Activated CD4-positive, alpha-beta T cell treated with anti-CD3 and anti-CD28 coated beads for 36 hours (primary cell): ENCODE measurements at regions of chr7 and their contacts with region 1.

Region 1: GRCh38 chr7:98280791-98281756 is at the start of gene BRI3:
- DNase-seq: peak; percentile 97
- ATAC-seq: peak; percentile 85
- H3K4me3 Mint-ChIP-seq: peak within 1 kb of the TSS; percentile 78
- H3K27ac Mint-ChIP-seq: peak within 1 kb of the TSS; percentile 76
- H3K4me1 Mint-ChIP-seq: peaks cover 27% of the 10 kb centered on the region
- H3K27me3 Mint-ChIP-seq: no peaks in the 10 kb centered on the region
- total RNA-seq, gene BRI3: 45.1 to 47.6 TPM

Region 2: DNA sequence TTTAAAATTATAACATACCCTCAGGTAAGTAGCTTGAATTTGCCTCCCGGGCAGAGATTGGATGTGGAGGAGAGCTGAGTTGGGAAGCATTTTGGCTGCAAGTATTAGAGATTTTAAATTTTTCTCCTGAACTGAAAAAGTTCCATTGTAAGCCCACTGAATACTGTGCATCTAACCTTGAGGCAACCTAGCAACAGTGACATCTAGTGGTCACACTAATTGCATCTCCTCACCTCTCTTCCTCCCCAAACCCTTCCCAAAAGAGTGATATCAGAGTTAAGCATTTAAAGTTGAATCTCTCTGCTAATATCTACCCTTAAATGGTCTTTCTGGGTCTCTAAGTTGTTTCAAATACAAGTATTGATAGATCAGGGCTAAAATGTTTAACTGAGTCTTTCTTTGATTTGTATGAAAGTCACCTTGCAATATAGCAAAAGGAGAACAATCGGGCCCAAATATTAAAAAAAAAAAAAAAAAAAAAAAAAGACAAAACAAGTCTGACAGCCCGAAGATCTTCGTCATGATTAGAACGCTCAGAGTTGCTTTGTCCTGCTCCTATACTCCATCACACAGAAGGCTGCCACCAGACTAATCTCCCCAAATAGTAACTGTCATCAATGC is 1216.0 kb before region 1 on chr7:
- CTCF ChIA-PET with region 1: no interaction called
- POLR2A ChIA-PET with region 1: no interaction called
- intact Hi-C with region 1: no loop called
- DNase-seq: peak; percentile 5
- ATAC-seq: no peak
- H3K4me3 Mint-ChIP-seq: no peak overlapping the region
- H3K27ac Mint-ChIP-seq: no peak overlapping the region
- H3K4me1 Mint-ChIP-seq: no peaks in the 10 kb centered on the region
- H3K27me3 Mint-ChIP-seq: peaks cover 8% of the 10 kb centered on the region

Region 3: DNA sequence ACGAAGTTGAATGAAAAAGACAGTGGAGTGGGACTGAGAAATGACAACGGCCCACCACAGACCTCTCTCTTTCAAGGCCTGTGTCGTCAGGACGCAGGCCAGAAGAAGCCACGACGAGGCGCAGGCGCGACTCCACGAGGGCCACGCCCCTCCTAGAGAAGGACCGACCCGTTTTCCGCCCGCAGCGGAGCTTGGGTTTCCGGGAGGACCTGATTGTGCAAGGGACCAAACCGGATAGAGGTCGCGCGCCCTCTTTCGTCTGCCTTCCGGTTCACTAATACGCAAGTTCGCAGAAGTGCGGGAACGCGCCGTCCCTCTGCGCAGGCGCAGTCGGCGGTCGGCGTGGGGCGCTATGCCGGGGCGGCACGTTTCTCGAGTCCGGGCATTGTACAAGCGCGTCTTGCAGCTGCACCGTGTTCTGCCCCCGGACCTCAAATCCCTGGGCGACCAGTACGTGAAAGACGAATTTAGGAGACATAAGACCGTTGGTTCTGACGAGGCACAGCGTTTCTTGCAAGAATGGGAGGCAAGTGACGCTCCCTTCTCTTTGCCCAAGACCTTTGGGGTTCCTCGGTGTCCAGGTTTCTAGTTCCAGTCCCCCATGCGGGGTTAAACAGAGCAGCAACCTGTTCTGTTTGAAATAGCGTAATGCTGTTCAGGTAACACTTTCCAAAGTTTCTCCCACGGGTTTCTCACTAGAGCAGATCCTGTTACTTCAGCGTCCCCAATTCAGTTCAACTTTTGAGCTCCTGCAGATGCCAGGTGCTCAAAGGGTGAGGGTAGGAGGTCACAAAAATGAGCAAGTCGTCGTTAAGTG is 1163.5 kb before region 1 on chr7 and contains the start of gene SDHAF3:
- CTCF ChIA-PET with region 1: no interaction called
- POLR2A ChIA-PET with region 1: no interaction called
- intact Hi-C with region 1: loop called in 1 of 2 experiments (anchors 1 kb)
- DNase-seq: peak; percentile 99
- ATAC-seq: peak; percentile 95
- H3K4me3 Mint-ChIP-seq: peak within 1 kb of the TSS; percentile 82
- H3K27ac Mint-ChIP-seq: peak within 1 kb of the TSS; percentile 95
- H3K4me1 Mint-ChIP-seq: peaks cover 38% of the 10 kb centered on the region
- H3K27me3 Mint-ChIP-seq: no peaks in the 10 kb centered on the region
- total RNA-seq, gene SDHAF3: 30.2 to 44.3 TPM

Region 4: GRCh38 chr7:97971990-97972943 is 308.8 kb before region 1 on chr7:
- CTCF ChIA-PET with region 1: no interaction called
- POLR2A ChIA-PET with region 1: no interaction called
- intact Hi-C with region 1: loop called in 1 of 2 experiments (anchors 1 kb)
- DNase-seq: peak; percentile 93
- ATAC-seq: peak; percentile 97
- H3K4me3 Mint-ChIP-seq: peak overlapping the region; percentile 98
- H3K27ac Mint-ChIP-seq: peak overlapping the region; percentile 97
- H3K4me1 Mint-ChIP-seq: peaks cover 19% of the 10 kb centered on the region
- H3K27me3 Mint-ChIP-seq: no peaks in the 10 kb centered on the region

Region 5: DNA sequence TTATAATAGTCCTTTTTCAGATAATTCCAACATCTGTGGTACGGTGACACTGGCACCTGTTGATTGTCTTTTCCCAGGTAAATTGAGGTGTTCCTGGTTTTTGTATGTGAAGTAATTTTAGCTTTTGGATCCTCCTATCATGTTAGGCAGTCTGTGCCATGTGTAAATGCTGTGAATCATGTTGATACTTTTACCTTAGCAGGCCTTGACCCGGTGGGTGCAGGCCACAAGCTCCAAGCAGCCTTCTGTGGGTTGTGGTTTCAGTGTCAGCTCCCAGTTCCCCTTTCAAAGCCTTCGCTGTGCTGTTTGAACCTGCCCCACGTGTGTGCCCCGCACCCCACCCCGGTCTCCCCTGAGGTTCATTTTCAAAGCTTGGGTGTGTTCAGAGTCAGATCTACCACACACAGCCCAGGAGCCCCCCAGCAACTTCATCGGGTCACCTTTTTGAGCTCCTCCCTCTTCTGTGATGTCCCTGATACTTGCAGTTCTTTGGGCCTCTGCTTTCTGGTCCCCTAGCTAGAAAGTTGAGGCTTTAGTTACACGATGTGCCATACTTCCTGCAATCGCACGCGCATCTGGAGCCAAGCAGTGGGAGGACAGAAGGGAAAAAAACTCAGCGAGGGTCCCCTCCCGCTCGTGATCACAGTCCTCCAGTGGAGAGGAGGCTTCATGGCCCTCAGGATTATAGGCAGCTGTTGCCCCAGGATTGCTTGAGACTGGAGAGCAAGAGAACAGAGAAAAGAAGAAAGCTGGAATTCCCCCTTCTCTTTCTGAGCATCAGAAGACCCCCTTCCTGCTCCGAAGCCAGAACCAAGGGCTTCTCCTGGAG is 78.5 kb before region 1 on chr7:
- CTCF ChIA-PET with region 1: no interaction called
- POLR2A ChIA-PET with region 1: no interaction called
- intact Hi-C with region 1: loop called in 1 of 2 experiments (anchors 5 kb)
- DNase-seq: peak; percentile 84
- ATAC-seq: peak; percentile 91
- H3K4me3 Mint-ChIP-seq: peak overlapping the region; percentile 46
- H3K27ac Mint-ChIP-seq: peak overlapping the region; percentile 88
- H3K4me1 Mint-ChIP-seq: peaks cover 55% of the 10 kb centered on the region
- H3K27me3 Mint-ChIP-seq: no peaks in the 10 kb centered on the region

Region 6: GRCh38 chr7:98400542-98401340 is 119.7 kb after region 1 on chr7 and contains the start of gene BAIAP2L1:
- CTCF ChIA-PET with region 1: interaction called, 5 read pairs
- POLR2A ChIA-PET with region 1: no interaction called
- intact Hi-C with region 1: loop called (anchors 1 to 5 kb)
- DNase-seq: peak; percentile 93
- ATAC-seq: peak; percentile 89
- H3K4me3 Mint-ChIP-seq: peak within 1 kb of the TSS; percentile 21
- H3K27ac Mint-ChIP-seq: no peak within 1 kb of the TSS
- H3K4me1 Mint-ChIP-seq: peaks cover 7% of the 10 kb centered on the region
- H3K27me3 Mint-ChIP-seq: peaks cover 20% of the 10 kb centered on the region
- total RNA-seq, gene BAIAP2L1: 2.3 to 3.0 TPM

Region 7: DNA sequence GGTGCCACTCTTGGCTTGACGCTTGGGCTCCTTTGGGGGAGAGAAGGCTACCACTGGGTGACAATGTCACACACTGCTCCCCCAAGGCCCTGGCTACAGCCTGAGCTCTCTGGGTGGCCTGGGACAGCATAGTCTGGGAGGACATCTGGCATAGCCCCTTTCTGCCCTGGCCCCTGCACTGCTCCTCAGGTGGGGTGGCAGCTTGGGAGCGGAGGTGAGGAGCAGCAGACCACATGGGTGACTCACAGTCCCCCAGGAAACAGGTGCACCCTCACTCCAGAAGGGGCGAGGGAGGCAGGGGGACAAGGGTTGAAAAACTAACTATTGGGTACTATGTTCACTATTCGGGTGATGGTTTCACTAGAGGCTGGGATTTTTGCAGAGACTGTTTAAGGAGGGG is 381.2 kb after region 1 on chr7:
- CTCF ChIA-PET with region 1: no interaction called
- POLR2A ChIA-PET with region 1: no interaction called
- intact Hi-C with region 1: no loop called
- DNase-seq: no peak
- ATAC-seq: no peak
- H3K4me3 Mint-ChIP-seq: no peak overlapping the region
- H3K27ac Mint-ChIP-seq: no peak overlapping the region
- H3K4me1 Mint-ChIP-seq: no peaks in the 10 kb centered on the region
- H3K27me3 Mint-ChIP-seq: peaks cover 2% of the 10 kb centered on the region

Region 8: GRCh38 chr7:98855610-98856422 is 574.7 kb after region 1 on chr7:
- CTCF ChIA-PET with region 1: no interaction called
- POLR2A ChIA-PET with region 1: no interaction called
- intact Hi-C with region 1: no loop called
- DNase-seq: no peak
- ATAC-seq: peak; percentile 49
- H3K4me3 Mint-ChIP-seq: no peak overlapping the region
- H3K27ac Mint-ChIP-seq: no peak overlapping the region
- H3K4me1 Mint-ChIP-seq: no peaks in the 10 kb centered on the region
- H3K27me3 Mint-ChIP-seq: peaks cover 8% of the 10 kb centered on the region

Region 9: GRCh38 chr7:99143853-99144672 is 863.0 kb after region 1 on chr7 and contains the start of gene SMURF1:
- CTCF ChIA-PET with region 1: no interaction called
- POLR2A ChIA-PET with region 1: no interaction called
- intact Hi-C with region 1: loop called in 1 of 2 experiments (anchors 2 kb)
- DNase-seq: peak; percentile 83
- ATAC-seq: peak; percentile 37
- H3K4me3 Mint-ChIP-seq: peak within 1 kb of the TSS; percentile 91
- H3K27ac Mint-ChIP-seq: peak within 1 kb of the TSS; percentile 93
- H3K4me1 Mint-ChIP-seq: peaks cover 35% of the 10 kb centered on the region
- H3K27me3 Mint-ChIP-seq: peaks cover 5% of the 10 kb centered on the region
- total RNA-seq, gene SMURF1: 12.4 to 13.4 TPM